PC-3 (cell line): ENCODE measurements at regions of chr4 and their contacts with region 1.

Region 1: DNA sequence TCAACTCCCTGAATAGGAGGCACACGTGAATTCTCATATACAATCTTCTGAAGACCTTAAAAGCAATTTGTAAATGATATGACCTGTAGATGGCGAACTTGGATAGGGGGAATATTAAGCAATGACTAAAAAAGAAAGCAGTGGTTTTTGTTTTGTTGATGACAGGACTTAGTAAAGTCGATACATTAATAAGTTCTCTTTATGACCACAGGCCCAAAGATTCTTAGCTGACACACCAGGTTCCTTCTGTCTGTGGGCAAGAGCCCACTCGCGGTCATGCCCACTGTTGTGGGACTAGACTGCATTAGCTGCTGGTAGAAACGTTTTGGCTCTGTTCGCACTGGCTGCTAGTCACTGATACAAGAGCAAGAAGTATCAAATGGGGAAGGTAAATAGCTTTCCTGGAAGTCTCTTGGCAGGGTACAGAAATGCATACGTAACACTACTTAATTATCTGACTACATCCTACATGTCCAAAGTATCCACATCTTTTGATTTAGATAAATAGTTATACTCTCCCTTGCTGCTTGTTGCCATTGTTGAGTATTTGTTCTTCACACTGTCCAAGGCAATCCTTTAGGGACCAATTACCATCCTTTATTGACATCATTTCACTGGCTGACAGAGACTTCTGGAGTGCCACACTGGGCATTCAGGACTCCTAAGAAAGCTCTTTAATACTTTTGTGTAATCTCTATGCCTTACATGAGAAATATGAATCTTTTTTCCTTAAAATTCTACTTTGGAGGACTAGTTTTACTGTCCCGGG is 31.0 kb downstream of the ALPK1 start:
- DNase-seq: peak; percentile 72
- ATAC-seq: peak; percentile 64
- H3K4me3 ChIP-seq: no peak overlapping the region
- H3K27ac ChIP-seq: no peak overlapping the region
- H3K4me1 ChIP-seq: no peaks in the 10 kb centered on the region
- H3K27me3 ChIP-seq: no peaks in the 10 kb centered on the region
- CTCF ChIP-seq: peak; percentile 66

Region 2: GRCh38 chr4:112312610-112313239 is 15.4 kb before region 1 on chr4:
- CTCF ChIA-PET with region 1: no interaction called
- POLR2A ChIA-PET with region 1: no interaction called
- intact Hi-C with region 1: no loop called
- DNase-seq: no peak
- ATAC-seq: no peak
- H3K4me3 ChIP-seq: no peak overlapping the region
- H3K27ac ChIP-seq: no peak overlapping the region
- H3K4me1 ChIP-seq: no peaks in the 10 kb centered on the region
- H3K27me3 ChIP-seq: no peaks in the 10 kb centered on the region
- CTCF ChIP-seq: no peak

Region 3: GRCh38 chr4:112381996-112382692 is 54.0 kb after region 1 on chr4:
- CTCF ChIA-PET with region 1: no interaction called
- POLR2A ChIA-PET with region 1: no interaction called
- intact Hi-C with region 1: no loop called
- DNase-seq: no peak
- ATAC-seq: no peak
- H3K4me3 ChIP-seq: no peak overlapping the region
- H3K27ac ChIP-seq: no peak overlapping the region
- H3K4me1 ChIP-seq: no peaks in the 10 kb centered on the region
- H3K27me3 ChIP-seq: no peaks in the 10 kb centered on the region
- CTCF ChIP-seq: no peak

Region 4: GRCh38 chr4:112523764-112524505 is 195.8 kb after region 1 on chr4:
- CTCF ChIA-PET with region 1: no interaction called
- POLR2A ChIA-PET with region 1: no interaction called
- intact Hi-C with region 1: loop called (anchors 1 kb)
- DNase-seq: peak; percentile 71
- ATAC-seq: peak; percentile 92
- H3K4me3 ChIP-seq: peak overlapping the region; percentile 79
- H3K27ac ChIP-seq: no peak overlapping the region
- H3K4me1 ChIP-seq: no peaks in the 10 kb centered on the region
- H3K27me3 ChIP-seq: peaks cover 16% of the 10 kb centered on the region
- CTCF ChIP-seq: peak; percentile 83

Region 5: GRCh38 chr4:112604589-112604988 is 276.4 kb after region 1 on chr4:
- CTCF ChIA-PET with region 1: no interaction called
- POLR2A ChIA-PET with region 1: no interaction called
- intact Hi-C with region 1: loop called (anchors 1 kb)
- DNase-seq: peak; percentile 55
- ATAC-seq: peak; percentile 88
- H3K4me3 ChIP-seq: no peak overlapping the region
- H3K27ac ChIP-seq: no peak overlapping the region
- H3K4me1 ChIP-seq: no peaks in the 10 kb centered on the region
- H3K27me3 ChIP-seq: no peaks in the 10 kb centered on the region
- CTCF ChIP-seq: peak; percentile 64

Region 6: DNA sequence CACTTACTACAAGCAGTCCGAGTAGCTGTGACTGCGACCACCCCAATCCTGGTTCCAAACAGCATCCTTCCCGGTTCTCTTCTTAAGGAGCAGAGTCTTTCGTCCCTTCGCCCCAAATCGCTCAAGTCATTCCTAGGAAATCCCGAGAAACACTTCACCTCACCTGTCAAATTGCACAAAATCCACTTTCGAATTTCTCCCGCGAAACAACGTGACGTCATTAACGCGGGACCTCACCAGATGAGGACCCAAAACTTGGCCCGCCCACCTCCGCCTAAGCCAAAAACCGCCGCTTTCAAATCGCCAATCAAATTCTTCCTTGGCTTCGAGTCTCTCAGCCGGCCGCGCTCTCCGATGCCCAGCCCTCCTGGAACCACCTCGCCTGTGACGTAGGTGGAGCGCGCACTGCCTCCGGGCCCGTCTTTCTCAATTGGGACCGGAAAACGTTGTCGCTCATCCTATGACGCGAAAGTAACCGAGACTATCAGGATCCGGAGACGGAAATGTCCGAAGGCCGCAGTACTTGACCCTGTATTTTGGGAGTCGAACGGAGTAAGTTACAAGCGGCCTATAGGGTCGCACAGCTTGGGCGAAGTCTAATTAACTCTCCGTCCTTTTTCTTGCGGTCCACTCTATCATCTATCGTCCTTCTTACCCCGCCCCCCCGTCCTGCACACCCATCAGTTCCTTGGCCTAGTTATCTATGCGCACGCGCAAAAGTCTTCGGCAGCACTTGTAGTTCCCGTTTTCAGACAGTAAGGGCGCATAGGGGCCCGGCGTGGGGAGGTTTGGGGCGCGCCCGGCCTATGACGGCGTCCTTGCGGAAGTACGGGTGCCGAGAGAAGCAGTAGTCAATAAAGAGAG is 308.8 kb after region 1 on chr4 and contains the starts of genes LARP7 and ZGRF1:
- CTCF ChIA-PET with region 1: no interaction called
- POLR2A ChIA-PET with region 1: no interaction called
- intact Hi-C with region 1: loop called (anchors 1 kb)
- DNase-seq: peak; percentile 97
- ATAC-seq: peak; percentile 94
- H3K4me3 ChIP-seq: peak within 1 kb of the TSS; percentile 81
- H3K27ac ChIP-seq: peak within 1 kb of the TSS; percentile 80
- H3K4me1 ChIP-seq: no peaks in the 10 kb centered on the region
- H3K27me3 ChIP-seq: no peaks in the 10 kb centered on the region
- CTCF ChIP-seq: peak; percentile 74
- total RNA-seq, gene LARP7: 13.0 and 17.1 TPM in 2 replicates
- total RNA-seq, gene ZGRF1: 7.3 and 10.0 TPM in 2 replicates